ENCODE measurements at regions of chr14 and their contacts with region 1.

Region 1: DNA sequence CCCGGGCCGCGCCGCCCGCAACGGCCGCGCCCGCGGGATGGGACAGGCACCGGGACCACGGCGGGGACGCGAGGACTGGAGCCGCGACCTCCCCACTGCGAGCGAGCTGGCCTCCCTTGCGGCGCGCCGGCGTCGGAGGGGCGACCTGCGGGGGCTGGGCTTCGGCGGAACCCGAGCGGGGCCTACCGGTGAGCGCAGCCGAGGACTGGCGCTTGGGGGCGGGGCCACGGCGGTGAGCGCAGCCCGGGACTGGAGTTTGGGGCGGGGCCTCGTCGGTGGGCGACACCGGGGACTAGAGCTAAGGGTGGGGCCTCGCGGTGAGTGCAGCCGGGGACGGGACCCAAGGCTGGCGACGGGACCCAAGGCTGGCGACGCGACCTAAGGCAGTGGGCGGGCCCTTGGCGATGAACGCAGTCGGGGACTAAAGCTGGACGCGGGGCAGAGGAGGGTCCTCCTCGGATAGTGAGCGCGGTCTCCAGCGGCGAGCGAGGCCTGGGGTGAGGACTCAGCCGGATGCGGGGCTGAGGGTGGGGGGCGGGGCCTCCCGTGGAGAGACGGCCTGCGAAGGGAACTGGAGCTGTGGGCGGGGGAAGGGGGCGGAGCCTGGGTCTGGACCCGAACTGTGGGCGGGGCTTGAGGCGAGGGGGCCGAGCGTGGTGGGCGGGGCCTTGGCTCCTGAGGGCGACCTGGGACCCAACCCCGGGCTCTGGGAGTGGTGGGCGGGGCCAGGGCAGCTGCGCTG is at the start of gene BRF1:
- DNase-seq: peak; percentile 99
- ATAC-seq: peak; percentile 85
- H3K4me3 ChIP-seq: peak within 1 kb of the TSS; percentile 55 to 78 (median 67)
- H3K4me3 Mint-ChIP-seq: peak within 1 kb of the TSS; percentile 92
- H3K27ac ChIP-seq: peak within 1 kb of the TSS; percentile 82 to 85
- H3K27ac Mint-ChIP-seq: peak within 1 kb of the TSS; percentile 96
- H3K4me1 ChIP-seq: peaks cover 15 to 22% of the 10 kb centered on the region in 2 donors
- H3K4me1 Mint-ChIP-seq: peaks cover 20% of the 10 kb centered on the region
- H3K27me3 ChIP-seq: no peaks in the 10 kb centered on the region
- H3K27me3 Mint-ChIP-seq: no peaks in the 10 kb centered on the region
- CTCF ChIP-seq: no peak
- total RNA-seq, gene BRF1: 55.8 and 61.5 TPM in 2 replicates

Region 2: GRCh38 chr14:104985675-104986525 is 315.1 kb before region 1 on chr14 and contains the start of gene CLBA1:
- CTCF ChIA-PET with region 1: no interaction called
- POLR2A ChIA-PET with region 1: no interaction called
- intact Hi-C with region 1: loop called (anchors 1 kb)
- DNase-seq: peak; percentile 95
- ATAC-seq: peak; percentile 92
- H3K4me3 ChIP-seq: peak within 1 kb of the TSS in 4 of 5 experiments; percentile 47 to 78 (median 62)
- H3K4me3 Mint-ChIP-seq: peak within 1 kb of the TSS; percentile 79
- H3K27ac ChIP-seq: peak within 1 kb of the TSS in 1 of 2 donors; percentile 73
- H3K27ac Mint-ChIP-seq: peak within 1 kb of the TSS; percentile 67
- H3K4me1 ChIP-seq: peaks cover 7 to 13% of the 10 kb centered on the region in 2 donors
- H3K4me1 Mint-ChIP-seq: peaks cover 7% of the 10 kb centered on the region
- H3K27me3 ChIP-seq: peaks cover 0 to 11% (median 5%) of the 10 kb centered on the region in 4 experiments
- H3K27me3 Mint-ChIP-seq: peaks cover 4% of the 10 kb centered on the region
- CTCF ChIP-seq: no peak
- total RNA-seq, gene CLBA1: 5.3 and 5.5 TPM in 2 replicates

Region 3: DNA sequence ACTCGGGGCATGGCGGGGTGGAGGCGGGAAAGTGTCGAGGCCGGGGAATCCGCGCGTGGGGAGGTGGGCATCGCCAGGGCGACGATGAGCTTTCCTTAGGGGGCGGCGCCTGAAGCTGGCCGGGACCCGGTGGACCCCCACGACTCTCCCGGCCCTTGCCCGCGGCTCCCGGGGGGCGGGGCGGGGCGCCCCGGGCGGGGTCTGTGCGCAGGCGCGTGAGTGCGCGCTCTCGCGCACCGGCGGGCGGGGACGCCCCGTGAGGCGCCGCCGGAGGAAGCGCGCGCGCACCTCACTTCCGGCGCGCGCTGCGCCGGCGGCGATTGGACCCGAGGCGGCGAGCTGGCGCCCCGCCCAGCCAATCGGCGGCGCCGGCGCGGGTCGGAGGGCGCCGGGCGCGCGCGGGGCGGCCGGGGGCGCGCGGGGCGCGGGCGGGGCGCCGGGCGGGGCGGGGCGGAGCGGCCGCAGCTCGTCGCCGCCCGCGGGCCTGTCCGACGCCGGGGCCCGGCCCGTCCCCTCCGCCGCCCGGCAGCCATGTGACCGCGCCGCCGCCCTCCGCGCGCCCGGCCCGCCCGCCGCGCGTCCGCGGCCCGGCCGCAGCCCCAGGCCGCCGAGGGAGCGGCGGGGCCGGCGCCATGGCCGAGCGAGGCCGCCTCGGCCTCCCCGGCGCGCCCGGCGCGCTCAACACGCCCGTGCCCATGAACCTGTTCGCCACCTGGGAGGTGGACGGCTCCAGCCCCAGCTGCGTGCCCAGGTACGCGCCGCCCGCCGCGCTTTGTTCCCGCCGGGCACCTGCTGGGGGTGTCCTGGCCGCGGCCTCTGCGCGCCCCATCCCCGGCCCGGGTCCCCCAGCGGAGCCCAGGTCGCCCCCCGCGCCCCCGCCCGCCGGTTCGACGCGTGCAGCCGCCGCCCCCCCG is 13.6 kb after region 1 on chr14 and contains the start of gene PACS2:
- CTCF ChIA-PET with region 1: interaction called, 12 read pairs
- POLR2A ChIA-PET with region 1: interaction called, 25 read pairs
- intact Hi-C with region 1: loop called (anchors 1 kb)
- DNase-seq: peak; percentile 92
- ATAC-seq: peak; percentile 80
- H3K4me3 ChIP-seq: peak within 1 kb of the TSS; percentile 5 to 67 (median 59)
- H3K4me3 Mint-ChIP-seq: peak within 1 kb of the TSS; percentile 93
- H3K27ac ChIP-seq: peak within 1 kb of the TSS in 1 of 2 donors; percentile 64
- H3K27ac Mint-ChIP-seq: peak within 1 kb of the TSS; percentile 94
- H3K4me1 ChIP-seq: peaks cover 13 to 22% of the 10 kb centered on the region in 2 donors
- H3K4me1 Mint-ChIP-seq: peaks cover 11% of the 10 kb centered on the region
- H3K27me3 ChIP-seq: no peaks in the 10 kb centered on the region
- H3K27me3 Mint-ChIP-seq: no peaks in the 10 kb centered on the region
- CTCF ChIP-seq: no peak
- total RNA-seq, gene PACS2: 70.7 and 71.8 TPM in 2 replicates

Region 4: GRCh38 chr14:105351920-105352851 is 51.2 kb after region 1 on chr14:
- CTCF ChIA-PET with region 1: interaction called, 3 read pairs
- POLR2A ChIA-PET with region 1: no interaction called
- intact Hi-C with region 1: loop called (anchors 2 kb)
- DNase-seq: peak; percentile 94
- ATAC-seq: peak; percentile 89
- H3K4me3 ChIP-seq: no peak overlapping the region
- H3K4me3 Mint-ChIP-seq: no peak overlapping the region
- H3K27ac ChIP-seq: peak overlapping the region; percentile 44 to 81
- H3K27ac Mint-ChIP-seq: peak overlapping the region; percentile 68
- H3K4me1 ChIP-seq: peaks cover 4 to 13% of the 10 kb centered on the region in 2 donors
- H3K4me1 Mint-ChIP-seq: peaks cover 8% of the 10 kb centered on the region
- H3K27me3 ChIP-seq: no peaks in the 10 kb centered on the region
- H3K27me3 Mint-ChIP-seq: no peaks in the 10 kb centered on the region
- CTCF ChIP-seq: peak; percentile 77

Region 5: DNA sequence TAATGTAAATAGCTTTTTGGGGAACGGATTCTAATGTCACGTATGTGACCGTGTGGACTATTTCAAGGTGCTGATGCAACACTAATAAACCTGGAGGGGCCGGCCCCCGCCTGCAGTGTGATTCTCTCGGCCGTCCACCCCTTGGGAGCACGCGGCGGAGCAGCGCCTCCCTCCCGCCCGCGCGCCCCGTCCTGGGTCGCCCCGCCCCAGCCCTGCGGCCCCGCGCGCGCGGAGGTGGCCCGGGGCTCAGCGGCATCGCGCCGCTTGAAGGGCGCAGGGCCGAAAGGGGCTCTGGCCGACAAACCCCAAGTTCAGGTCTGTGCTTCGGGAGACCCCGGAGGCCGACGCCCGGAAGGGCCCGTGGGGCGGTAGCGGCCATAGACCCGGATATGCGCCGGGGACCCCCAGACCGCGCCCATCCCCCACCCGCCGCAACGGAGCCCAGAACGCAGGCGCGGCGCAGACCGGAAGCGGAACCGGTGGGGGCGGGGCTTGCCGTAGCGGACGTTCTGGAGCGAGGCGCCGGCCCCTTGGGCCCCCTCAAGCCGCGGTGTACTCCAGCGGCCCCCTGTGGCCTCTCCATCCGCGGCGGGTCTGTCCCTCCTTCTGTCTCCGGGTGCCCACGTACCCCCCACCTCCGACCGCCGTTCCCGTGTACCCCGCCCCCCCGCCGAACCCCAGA is 97.2 kb after region 1 on chr14 and contains the start of gene TEX22:
- CTCF ChIA-PET with region 1: no interaction called
- POLR2A ChIA-PET with region 1: interaction called, 3 read pairs
- intact Hi-C with region 1: loop called (anchors 5 kb)
- DNase-seq: peak; percentile 93
- ATAC-seq: peak; percentile 88
- H3K4me3 ChIP-seq: peak within 1 kb of the TSS; percentile 31 to 94 (median 86)
- H3K4me3 Mint-ChIP-seq: peak within 1 kb of the TSS; percentile 90
- H3K27ac ChIP-seq: peak within 1 kb of the TSS; percentile 75 to 86
- H3K27ac Mint-ChIP-seq: peak within 1 kb of the TSS; percentile 91
- H3K4me1 ChIP-seq: peaks cover 16 to 23% of the 10 kb centered on the region in 2 donors
- H3K4me1 Mint-ChIP-seq: peaks cover 16% of the 10 kb centered on the region
- H3K27me3 ChIP-seq: no peaks in the 10 kb centered on the region
- H3K27me3 Mint-ChIP-seq: no peaks in the 10 kb centered on the region
- CTCF ChIP-seq: peak; percentile 36
- total RNA-seq, gene TEX22: 7.0 and 8.4 TPM in 2 replicates

Measured in B cell (primary cell).